Right cardiac atrium (tissue), 5 donors: ENCODE measurements at regions of chr9 and their contacts with region 1.

Region 1: DNA sequence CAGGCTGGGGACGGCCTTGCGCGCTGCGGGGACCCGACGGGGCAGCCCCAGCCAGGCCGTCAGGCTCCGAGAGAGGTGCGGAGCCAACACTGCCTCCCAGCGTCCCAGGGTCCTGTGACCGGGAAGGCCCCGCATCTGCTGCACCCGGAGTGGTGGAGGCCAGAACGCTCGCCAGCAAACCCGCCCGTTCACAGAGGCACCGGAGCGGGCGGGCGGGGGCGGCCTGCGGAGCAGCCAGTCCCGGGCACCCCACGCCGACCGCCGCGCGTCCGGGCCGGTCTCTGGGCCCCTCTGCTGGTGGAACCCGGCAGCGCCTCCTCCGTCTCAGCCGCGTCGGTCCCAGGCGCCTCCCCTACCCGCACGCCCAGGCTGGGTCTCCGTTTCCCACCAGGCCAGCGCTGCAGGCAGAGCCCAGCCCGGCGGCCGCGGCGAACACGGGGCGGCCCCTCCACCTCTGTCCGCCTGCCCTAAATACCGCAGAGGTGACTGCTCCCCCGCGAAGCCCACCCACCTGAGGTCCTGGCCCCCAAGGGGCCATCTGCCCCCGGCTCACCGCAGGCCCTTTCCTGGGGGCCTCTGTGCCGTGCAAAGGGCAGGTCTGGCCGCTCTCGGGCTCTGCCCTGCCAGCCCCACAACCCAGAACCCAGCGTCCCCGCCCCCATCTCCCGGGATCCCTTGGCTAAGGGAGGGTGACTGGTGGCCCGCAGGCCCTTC is 15.9 kb downstream of the EXD3 start:
- DNase-seq: peak; percentile 75 to 91 (median 88)
- ATAC-seq: peak; percentile 84 to 86
- H3K4me3 ChIP-seq: peak overlapping the region; percentile 32
- H3K27ac ChIP-seq: peak overlapping the region; percentile 46
- H3K4me1 ChIP-seq: no peaks in the 10 kb centered on the region
- H3K27me3 ChIP-seq: no peaks in the 10 kb centered on the region

Region 2: DNA sequence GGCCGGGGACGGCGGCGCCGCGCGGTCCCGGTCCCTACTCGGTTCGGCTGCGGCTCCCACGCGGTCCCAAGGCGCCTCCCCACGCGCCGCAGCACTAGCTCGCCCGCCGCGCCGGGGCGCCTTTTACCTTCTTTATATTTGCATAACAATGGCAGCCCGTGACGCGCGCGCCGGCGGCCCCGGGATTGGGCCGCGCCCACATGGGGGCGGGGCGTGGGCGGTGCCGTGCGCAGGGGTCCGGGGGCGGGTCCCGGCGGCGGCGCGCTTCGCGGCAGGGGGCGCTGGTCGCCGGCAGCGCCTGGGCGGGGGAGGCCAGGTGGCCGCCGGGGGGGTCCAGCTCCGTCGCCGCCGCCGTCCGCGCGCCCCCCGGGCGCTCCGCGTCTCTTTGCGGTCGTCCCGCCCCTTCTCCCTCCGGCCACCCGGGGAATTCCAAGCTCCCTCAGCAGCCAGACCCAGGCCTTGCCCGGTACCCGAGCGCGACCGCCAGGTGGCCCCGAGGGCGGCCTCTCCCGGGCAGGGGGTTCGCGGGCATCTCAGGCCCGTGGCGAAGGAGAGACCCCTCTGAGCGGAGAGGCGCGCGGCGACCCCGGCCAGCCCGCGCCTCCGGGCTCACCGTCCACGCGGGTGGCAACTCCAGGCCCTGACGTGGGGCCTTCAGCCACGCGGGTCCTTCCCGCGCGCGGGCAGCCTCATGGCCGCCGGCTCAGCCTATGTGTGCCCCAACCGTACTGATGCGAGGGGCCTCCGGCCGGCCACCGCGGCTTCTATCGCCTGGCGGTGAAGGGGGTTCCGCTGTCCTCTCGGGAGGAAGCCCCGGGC is 104.6 kb before region 1 on chr9 and contains the start of gene NRARP:
- intact Hi-C with region 1: loop called (anchors 2 to 10 kb)
- DNase-seq: peak; percentile 91 to 97 (median 96)
- ATAC-seq: peak; percentile 44 to 64
- H3K4me3 ChIP-seq: peak within 1 kb of the TSS; percentile 76
- H3K27ac ChIP-seq: peak within 1 kb of the TSS; percentile 60
- H3K4me1 ChIP-seq: no peaks in the 10 kb centered on the region
- H3K27me3 ChIP-seq: no peaks in the 10 kb centered on the region
- total RNA-seq, gene NRARP: 4.5 to 14.5 (median 7.9) TPM

Region 3: DNA sequence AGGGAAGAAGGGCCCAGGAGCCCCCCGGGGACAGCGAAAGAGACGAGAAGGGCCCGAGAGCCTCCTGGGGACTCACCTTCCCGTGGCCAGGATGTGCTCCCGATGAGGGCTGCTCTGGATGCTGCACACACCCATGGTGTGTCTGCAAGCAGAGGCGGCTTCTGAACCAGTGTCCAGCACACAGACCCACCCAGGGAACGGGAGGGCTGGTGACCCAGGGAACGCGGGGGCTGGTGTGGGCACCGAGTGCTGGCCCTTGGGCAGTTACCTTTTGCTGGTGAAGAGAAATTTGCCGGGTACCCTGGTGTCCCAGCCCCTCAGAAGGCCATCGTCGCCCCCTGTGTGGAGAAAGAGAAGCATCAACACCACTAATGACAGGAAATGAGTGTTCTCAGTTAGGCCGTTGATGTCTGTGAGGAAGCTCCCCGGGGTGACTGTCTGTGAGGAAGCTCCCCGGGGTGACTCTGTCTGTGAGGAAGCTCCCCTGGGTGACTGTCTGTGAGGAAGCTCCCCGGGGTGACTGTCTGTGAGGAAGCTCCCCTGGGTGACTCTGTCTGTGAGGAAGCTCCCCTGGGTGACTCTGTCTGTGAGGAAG is 157.9 kb after region 1 on chr9:
- intact Hi-C with region 1: no loop called
- DNase-seq: peak in 1 of 3 donors; percentile 31
- ATAC-seq: no peak
- H3K4me3 ChIP-seq: no peak overlapping the region
- H3K27ac ChIP-seq: no peak overlapping the region
- H3K4me1 ChIP-seq: no peaks in the 10 kb centered on the region
- H3K27me3 ChIP-seq: no peaks in the 10 kb centered on the region